Pancreas (tissue), 10 donors: ENCODE measurements at regions of chr2 and their contacts with region 1.

Region 1: GRCh38 chr2:200677721-200678585 is 92.1 kb downstream of the AOX1 start:
- DNase-seq: no peak
- ATAC-seq: peak; percentile 77 to 84 (median 80)
- H3K4me3 ChIP-seq: no peak overlapping the region
- H3K27ac ChIP-seq: peak overlapping the region; percentile 9 to 70 (median 34)
- H3K4me1 ChIP-seq: peaks cover 17 to 29% (median 25%) of the 10 kb centered on the region in 3 donors
- H3K27me3 ChIP-seq: no peaks in the 10 kb centered on the region
- CTCF ChIP-seq: no peak

Region 2: DNA sequence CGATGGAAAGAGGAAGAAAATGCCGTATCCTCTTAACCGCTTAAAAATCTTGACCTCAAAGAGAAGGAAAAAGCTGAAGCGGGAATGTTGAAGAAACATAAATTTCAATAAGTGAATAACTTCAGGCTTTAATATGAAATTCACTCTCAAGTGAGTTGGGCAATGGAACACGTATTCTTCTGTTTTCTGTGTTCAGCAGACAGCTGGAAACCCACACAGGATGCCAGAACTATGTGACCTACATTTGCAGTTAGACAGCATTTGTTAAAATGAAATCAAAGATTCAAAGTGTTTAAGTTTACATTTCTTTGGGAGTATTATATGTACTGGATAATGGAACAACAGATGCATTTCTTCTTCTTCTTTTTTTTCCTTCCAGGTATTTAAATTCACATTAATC is 452.0 kb before region 1 on chr2:
- intact Hi-C with region 1: no loop called
- DNase-seq: no peak
- ATAC-seq: no peak
- H3K4me3 ChIP-seq: no peak overlapping the region
- H3K27ac ChIP-seq: no peak overlapping the region
- H3K4me1 ChIP-seq: peaks cover 15 to 35% (median 23%) of the 10 kb centered on the region in 3 donors
- H3K27me3 ChIP-seq: no peaks in the 10 kb centered on the region
- CTCF ChIP-seq: no peak

Region 3: GRCh38 chr2:200585730-200586643 is 92.0 kb before region 1 on chr2 and contains the start of gene AOX1:
- intact Hi-C with region 1: loop called in 1 of 3 experiments (anchors 10 kb)
- DNase-seq: peak; percentile 79 to 89 (median 84)
- ATAC-seq: peak; percentile 79 to 86 (median 82)
- H3K4me3 ChIP-seq: peak within 1 kb of the TSS; percentile 46 to 60 (median 50)
- H3K27ac ChIP-seq: peak within 1 kb of the TSS in 3 of 4 donors; percentile 35 to 91 (median 89)
- H3K4me1 ChIP-seq: peaks cover 7 to 29% (median 27%) of the 10 kb centered on the region in 3 donors
- H3K27me3 ChIP-seq: no peaks in the 10 kb centered on the region
- CTCF ChIP-seq: no peak
- total RNA-seq, gene AOX1: 94.6 to 181 (median 136) TPM

Region 4: DNA sequence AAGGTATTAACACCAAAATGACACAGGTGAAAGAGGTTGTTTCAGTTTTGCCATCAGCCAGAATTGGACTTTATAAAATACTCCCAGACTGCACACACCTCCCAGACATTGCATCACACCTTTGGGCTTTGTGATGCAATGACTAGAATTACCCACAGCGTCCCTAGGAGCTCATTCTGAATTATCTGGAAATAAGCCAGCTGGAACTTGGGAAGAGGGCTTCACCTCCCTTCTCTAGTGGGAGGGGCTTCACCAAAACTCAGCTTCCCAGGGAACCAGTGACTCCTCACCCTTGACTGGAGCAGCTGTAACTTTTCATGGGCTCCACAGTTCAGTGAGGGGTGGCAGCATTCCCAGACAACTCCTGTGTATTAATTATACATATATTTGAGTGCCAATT is 50.7 kb after region 1 on chr2:
- intact Hi-C with region 1: no loop called
- DNase-seq: no peak
- ATAC-seq: peak in 1 of 4 donors; percentile 53
- H3K4me3 ChIP-seq: no peak overlapping the region
- H3K27ac ChIP-seq: no peak overlapping the region
- H3K4me1 ChIP-seq: no peaks in the 10 kb centered on the region
- H3K27me3 ChIP-seq: no peaks in the 10 kb centered on the region
- CTCF ChIP-seq: no peak

Region 5: DNA sequence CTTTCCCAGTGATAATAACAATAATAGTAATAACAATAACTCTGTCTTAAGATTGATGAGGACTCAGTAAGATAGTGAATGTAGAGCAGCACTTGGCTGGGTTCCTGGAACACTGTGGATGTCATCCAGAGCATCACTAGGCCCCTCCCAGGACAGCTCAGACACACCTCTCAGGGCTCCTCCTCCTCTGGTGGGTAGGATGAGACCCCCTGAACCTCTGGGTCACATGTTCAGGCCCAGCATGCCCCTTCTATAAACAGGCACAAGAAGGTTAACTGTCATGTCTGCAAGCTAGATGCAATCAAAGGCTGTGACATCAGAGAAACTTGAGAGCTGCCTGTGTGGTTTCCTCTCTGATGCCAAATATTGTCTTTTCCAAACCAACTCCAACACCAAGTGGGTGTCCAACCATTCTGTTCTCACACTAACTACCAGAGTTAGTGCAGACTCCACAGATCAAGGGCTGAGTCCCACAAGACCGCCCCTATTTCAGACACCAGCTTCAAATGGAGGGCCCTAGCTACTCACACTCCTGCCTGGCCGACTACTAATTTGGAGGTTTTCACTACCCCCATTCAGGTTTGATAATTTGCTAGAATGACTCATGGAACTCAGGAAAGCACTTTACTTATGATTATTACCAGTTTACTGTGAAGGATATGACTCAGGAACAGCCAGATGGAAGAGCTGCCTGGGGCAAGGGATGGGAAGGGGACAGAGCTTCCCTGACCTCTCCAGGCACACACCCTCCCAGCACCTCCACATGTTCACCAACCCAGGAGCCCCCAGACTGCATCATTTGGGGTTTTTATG is 87.4 kb after region 1 on chr2:
- intact Hi-C with region 1: no loop called
- DNase-seq: no peak
- ATAC-seq: peak in 3 of 4 donors; percentile 39 to 56 (median 47)
- H3K4me3 ChIP-seq: no peak overlapping the region
- H3K27ac ChIP-seq: no peak overlapping the region
- H3K4me1 ChIP-seq: no peaks in the 10 kb centered on the region
- H3K27me3 ChIP-seq: no peaks in the 10 kb centered on the region
- CTCF ChIP-seq: no peak